ENCODE measurements at regions of chr20 and their contacts with region 1.

Region 1: GRCh38 chr20:24768201-24768636 is 180.8 kb upstream of the CST7 start:
- DNase-seq: no peak
- ATAC-seq: no peak
- H3K4me3 ChIP-seq: no peak overlapping the region
- H3K27ac ChIP-seq: no peak overlapping the region
- H3K4me1 ChIP-seq: no peaks in the 10 kb centered on the region
- H3K27me3 ChIP-seq: no peaks in the 10 kb centered on the region

Region 2: GRCh38 chr20:24718696-24719095 is 49.5 kb before region 1 on chr20:
- intact Hi-C with region 1: loop called in 1 of 2 experiments (anchors 10 kb)
- DNase-seq: no peak
- ATAC-seq: no peak
- H3K4me3 ChIP-seq: no peak overlapping the region
- H3K27ac ChIP-seq: no peak overlapping the region
- H3K4me1 ChIP-seq: no peaks in the 10 kb centered on the region
- H3K27me3 ChIP-seq: no peaks in the 10 kb centered on the region

Region 3: DNA sequence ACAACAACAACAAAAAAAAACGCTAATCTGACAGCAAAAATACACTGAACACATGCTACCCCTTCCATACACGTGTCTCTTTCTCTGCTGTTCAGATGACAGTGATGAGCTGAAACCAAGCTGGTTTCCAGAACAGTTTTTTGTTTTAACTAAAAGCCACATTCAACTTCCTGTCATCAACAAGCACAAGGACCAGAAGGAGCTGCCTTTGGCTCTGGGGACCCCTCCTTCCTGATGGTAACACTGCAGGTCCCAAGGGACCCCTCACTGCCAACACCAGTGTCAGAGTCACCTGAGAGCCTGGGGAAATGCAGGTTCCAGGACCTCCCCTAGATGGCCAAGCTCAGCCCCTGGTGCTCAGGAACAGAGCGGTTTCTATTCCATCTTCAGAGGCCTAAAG is 186.8 kb after region 1 on chr20:
- intact Hi-C with region 1: no loop called
- DNase-seq: peak in 1 of 2 donors; percentile 40
- ATAC-seq: no peak
- H3K4me3 ChIP-seq: no peak overlapping the region
- H3K27ac ChIP-seq: no peak overlapping the region
- H3K4me1 ChIP-seq: no peaks in the 10 kb centered on the region
- H3K27me3 ChIP-seq: no peaks in the 10 kb centered on the region